Activated CD4-positive, alpha-beta memory T cell treated with anti-CD3 and anti-CD28 coated beads for 36 hours (primary cell): ENCODE measurements at regions of chr1 and their contacts with region 1.

Region 1: GRCh38 chr1:94039514-94039870 is 81.5 kb downstream of the ABCA4 start:
- DNase-seq: peak; percentile 71
- H3K4me3 Mint-ChIP-seq: no peak overlapping the region
- H3K27ac Mint-ChIP-seq: no peak overlapping the region
- H3K4me1 Mint-ChIP-seq: peaks cover 18% of the 10 kb centered on the region
- H3K27me3 Mint-ChIP-seq: peaks cover 34% of the 10 kb centered on the region

Region 2: GRCh38 chr1:93607814-93608186 is 431.7 kb before region 1 on chr1:
- CTCF ChIA-PET with region 1: no interaction called
- POLR2A ChIA-PET with region 1: no interaction called
- intact Hi-C with region 1: loop called (anchors 1 kb)
- DNase-seq: peak; percentile 85
- H3K4me3 Mint-ChIP-seq: no peak overlapping the region
- H3K27ac Mint-ChIP-seq: peak overlapping the region; percentile 43
- H3K4me1 Mint-ChIP-seq: peaks cover 39% of the 10 kb centered on the region
- H3K27me3 Mint-ChIP-seq: peaks cover 21% of the 10 kb centered on the region

Region 3: DNA sequence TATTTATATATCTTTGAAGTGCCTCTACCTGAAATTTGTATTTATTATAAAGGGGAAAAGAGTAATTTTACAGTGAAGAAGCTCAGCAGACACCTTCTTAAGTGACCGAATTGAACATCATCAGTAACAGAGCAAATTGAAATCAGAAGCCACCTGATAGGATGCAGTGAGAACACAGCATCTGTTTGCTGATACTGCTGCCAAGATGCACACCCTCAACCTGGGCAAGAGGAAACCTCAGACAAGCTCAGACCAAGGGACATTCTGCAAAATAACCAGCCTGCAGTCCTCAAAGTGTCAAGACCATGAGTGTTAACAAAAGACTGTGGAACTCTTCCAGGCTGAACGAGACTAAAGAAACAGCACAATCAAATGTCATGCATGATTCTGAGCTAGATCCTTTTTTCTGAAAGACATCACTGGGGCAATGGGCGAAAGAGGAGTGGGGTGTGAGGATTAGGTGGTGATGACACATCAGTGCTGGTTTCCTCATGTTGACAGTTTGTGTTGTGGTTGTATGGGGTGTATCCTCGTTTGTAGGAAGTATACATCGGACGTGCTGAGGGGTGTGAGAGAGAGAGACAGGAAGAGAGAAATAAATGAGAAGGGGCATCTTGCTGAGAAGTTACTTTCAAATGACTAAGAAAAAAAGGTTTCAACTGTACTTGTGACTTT is 22.2 kb before region 1 on chr1:
- CTCF ChIA-PET with region 1: interaction called, 6 read pairs
- POLR2A ChIA-PET with region 1: interaction called, 3 read pairs
- intact Hi-C with region 1: loop called (anchors 1 kb)
- DNase-seq: peak; percentile 50
- H3K4me3 Mint-ChIP-seq: no peak overlapping the region
- H3K27ac Mint-ChIP-seq: peak overlapping the region; percentile 14
- H3K4me1 Mint-ChIP-seq: peaks cover 8% of the 10 kb centered on the region
- H3K27me3 Mint-ChIP-seq: no peaks in the 10 kb centered on the region

Region 4: DNA sequence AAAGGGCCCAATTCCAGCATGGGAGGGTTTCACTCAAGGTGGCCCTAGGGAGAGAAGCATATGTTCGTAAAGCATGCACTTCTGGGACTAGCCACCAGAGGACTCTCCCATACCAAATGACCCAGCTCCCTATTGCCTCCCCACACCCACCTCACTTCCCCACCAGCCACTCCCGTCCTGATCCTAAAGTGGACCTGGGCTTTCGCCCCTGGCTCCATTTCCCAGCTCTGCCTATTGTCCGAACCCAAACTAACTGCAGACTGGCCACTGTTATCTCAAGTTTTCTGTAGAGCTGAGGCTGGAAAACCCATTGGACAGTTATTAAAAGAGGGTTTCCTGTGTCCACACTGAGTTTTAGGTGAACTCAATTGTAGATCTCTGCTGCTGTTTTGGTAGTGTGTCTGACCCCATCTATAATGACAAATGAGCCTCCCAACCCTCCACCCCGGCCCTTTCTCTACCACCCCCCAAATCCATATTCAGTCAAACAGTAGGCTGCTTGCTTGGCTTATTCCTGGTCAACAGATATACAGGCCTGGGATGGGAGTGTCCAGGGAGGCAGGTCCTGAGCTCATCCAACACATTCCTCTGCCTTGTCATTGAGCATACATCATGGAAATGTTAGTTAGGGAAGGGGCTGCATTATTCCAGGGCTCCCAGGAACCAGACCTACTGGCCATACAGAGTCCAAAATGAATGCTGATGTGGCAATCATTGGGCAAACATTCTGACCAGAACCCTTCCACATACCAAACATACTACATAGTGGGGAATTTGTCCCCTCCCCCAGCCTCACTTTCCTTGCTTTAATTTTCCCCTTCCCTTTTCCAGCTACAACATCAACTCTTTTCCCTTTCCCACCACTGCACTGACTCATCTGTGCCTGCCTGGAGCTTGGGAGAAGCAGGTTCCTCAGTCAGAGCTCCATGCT is 22.3 kb after region 1 on chr1:
- CTCF ChIA-PET with region 1: interaction called, 11 read pairs
- POLR2A ChIA-PET with region 1: no interaction called
- intact Hi-C with region 1: no loop called
- DNase-seq: peak; percentile 49
- H3K4me3 Mint-ChIP-seq: no peak overlapping the region
- H3K27ac Mint-ChIP-seq: no peak overlapping the region
- H3K4me1 Mint-ChIP-seq: no peaks in the 10 kb centered on the region
- H3K27me3 Mint-ChIP-seq: peaks cover 14% of the 10 kb centered on the region

Region 5: GRCh38 chr1:94083681-94084080 is 44.2 kb after region 1 on chr1:
- CTCF ChIA-PET with region 1: no interaction called
- POLR2A ChIA-PET with region 1: no interaction called
- intact Hi-C with region 1: no loop called
- DNase-seq: no peak
- H3K4me3 Mint-ChIP-seq: no peak overlapping the region
- H3K27ac Mint-ChIP-seq: no peak overlapping the region
- H3K4me1 Mint-ChIP-seq: no peaks in the 10 kb centered on the region
- H3K27me3 Mint-ChIP-seq: peaks cover 13% of the 10 kb centered on the region

Region 6: GRCh38 chr1:94335950-94336349 is 296.5 kb after region 1 on chr1:
- CTCF ChIA-PET with region 1: interaction called, 12 read pairs
- POLR2A ChIA-PET with region 1: no interaction called
- intact Hi-C with region 1: loop called (anchors 5 kb)
- DNase-seq: peak; percentile 23
- H3K4me3 Mint-ChIP-seq: no peak overlapping the region
- H3K27ac Mint-ChIP-seq: no peak overlapping the region
- H3K4me1 Mint-ChIP-seq: peaks cover 2% of the 10 kb centered on the region
- H3K27me3 Mint-ChIP-seq: peaks cover 10% of the 10 kb centered on the region

Region 7: DNA sequence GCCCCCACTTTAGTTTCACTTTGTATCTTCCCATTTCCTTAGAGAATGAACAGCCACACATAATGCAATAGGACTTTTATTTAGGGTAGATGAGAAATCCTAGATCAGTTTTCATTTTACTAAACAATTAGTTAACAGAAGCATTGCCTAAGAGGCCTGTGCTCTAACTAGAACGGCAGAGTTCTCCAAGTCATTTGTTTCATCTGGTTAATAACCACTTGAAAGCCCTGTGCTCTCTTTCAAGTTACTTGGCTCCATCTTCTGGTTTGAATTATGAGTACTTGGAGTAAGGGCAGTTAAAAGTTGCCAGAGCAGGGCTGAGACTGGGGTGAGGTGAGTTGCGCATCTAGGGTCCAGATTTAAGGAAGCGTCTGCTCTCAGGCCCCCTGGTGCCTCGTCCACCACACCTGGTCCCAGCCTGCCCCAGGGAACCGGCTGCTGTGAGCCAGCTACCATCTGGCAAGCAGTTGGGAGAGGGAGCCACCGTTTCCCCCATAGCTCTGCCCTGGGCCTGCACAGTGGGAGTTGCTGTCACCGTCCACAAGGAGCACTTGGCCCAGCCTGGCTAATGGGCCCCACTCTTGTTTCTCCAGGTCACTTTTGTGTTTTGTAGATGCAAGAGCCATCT is 762.5 kb after region 1 on chr1:
- CTCF ChIA-PET with region 1: interaction called, 10 read pairs
- POLR2A ChIA-PET with region 1: no interaction called
- intact Hi-C with region 1: no loop called
- DNase-seq: no peak
- H3K4me3 Mint-ChIP-seq: no peak overlapping the region
- H3K27ac Mint-ChIP-seq: no peak overlapping the region
- H3K4me1 Mint-ChIP-seq: peaks cover 7% of the 10 kb centered on the region
- H3K27me3 Mint-ChIP-seq: peaks cover 1% of the 10 kb centered on the region